ENCODE measurements at regions of chr2 and their contacts with region 1.

Region 1: DNA sequence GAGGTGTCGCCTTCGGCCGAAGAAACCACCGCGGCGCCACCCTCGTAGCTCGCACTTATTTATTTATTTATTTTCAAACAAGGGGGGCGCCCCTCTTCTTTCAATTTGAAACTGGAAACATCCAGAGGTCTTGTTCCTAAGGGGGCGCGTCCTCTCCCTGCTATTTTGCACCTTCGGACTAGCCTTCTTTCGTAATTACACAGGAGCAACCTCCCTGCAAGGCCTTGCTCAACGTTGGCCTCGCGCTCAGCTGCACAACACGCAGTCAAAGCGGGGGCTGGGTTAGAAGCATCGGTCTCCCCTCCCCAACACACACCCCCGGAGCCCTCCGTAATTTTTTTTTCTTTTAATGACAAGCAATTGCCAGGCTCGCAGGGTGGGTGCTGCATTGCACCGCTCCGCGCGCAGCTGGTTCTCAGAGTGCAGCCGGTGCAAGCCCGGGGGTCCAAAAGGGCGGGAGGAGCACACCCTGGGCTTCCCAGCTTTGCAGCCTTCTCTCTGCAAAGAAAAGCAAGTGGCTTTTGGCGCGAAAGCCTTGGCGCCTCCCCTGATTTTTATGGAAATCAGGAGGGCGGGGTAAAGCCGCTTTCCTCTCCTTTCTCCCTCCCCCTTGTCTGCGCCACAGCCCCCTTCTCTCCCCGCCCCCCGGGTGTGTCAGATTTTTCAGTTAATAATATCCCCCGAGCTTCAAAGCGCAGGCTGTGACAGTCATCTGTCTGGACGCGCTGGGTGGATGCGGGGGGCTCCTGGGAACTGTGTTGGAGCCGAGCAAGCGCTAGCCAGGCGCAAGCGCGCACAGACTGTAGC is at the start of gene MYCN:
- DNase-seq: peak; percentile 19
- H3K27ac ChIP-seq: no peak within 1 kb of the TSS
- CTCF ChIP-seq: 0 out of 2 replicates have a peak, but pooled peaks have one; percentile 25

Region 2: GRCh38 chr2:15920696-15921095 is 19.4 kb before region 1 on chr2:
- CTCF ChIA-PET with region 1: no interaction called
- POLR2A ChIA-PET with region 1: no interaction called
- DNase-seq: no peak
- H3K27ac ChIP-seq: no peak overlapping the region
- CTCF ChIP-seq: no peak

Region 3: DNA sequence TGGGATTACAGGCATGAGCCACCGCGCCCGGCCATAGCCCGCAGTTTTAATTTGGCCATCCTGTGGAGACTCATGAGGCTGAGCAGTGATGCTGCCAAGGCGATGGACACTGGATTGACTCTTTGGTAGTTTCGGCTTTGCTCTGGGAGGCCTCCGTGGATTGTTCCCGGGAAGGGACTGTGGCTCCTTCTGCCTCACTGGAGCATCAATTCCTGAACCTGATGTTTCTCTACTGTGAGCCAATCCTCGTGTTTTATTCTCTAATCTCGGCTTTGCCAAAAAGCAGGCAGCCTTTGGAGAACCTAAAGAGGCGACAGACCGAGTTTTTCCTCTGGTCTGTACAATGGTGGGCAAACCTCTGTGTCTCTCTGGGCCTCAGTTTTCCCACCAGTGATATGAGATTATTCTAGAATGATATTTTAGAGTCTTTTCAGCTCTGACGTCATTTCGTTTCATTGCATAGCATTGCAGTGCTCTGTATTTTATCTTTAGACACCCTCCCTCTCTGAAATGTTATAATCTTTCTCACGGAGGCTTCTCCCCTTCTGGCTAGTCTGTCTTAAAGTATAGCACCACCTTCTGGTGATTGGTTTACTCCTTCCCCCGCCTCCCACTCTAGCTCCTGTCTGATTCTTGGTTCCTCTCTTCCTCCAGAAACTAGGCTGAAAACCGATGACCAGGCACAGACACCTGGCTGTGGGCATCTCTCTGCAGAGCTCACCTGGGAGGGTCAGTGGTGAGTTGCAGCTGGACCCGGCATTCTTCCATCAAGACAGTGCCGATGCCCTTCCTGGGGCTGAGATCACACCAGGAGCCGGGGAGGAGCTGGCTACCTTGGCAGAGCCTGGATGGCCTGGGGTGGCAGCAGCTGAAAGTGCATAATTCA is 341.6 kb after region 1 on chr2:
- CTCF ChIA-PET with region 1: interaction called, 10 read pairs
- POLR2A ChIA-PET with region 1: no interaction called
- DNase-seq: peak; percentile 12
- H3K27ac ChIP-seq: no peak overlapping the region
- CTCF ChIP-seq: no peak

Region 4: DNA sequence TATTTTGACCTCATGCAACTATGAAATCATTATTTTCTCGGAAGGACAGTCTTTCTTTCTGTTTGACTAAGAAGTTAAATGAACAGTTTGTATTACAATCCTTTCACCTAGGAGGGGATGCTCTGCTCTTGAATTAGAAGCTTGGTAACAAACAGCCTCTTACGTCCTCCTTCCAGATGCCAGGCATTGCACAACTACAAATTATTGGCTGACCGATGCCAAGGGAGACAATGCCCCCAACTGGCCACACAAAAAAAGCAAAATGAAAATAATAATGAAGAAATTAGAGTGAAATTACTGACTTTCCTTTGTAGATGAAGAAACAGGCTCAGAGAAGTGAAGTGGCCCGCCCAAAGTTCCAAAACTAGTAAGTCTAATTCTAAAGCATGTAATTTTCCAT is 547.6 kb after region 1 on chr2:
- CTCF ChIA-PET with region 1: interaction called, 15 read pairs
- POLR2A ChIA-PET with region 1: no interaction called
- DNase-seq: peak; percentile 25
- H3K27ac ChIP-seq: no peak overlapping the region
- CTCF ChIP-seq: peak; percentile 19; the same call in 1 of the 2 replicates

Measured in RWPE1 (cell line).